ENCODE measurements at regions of chr5 and their contacts with region 1.

Region 1: DNA sequence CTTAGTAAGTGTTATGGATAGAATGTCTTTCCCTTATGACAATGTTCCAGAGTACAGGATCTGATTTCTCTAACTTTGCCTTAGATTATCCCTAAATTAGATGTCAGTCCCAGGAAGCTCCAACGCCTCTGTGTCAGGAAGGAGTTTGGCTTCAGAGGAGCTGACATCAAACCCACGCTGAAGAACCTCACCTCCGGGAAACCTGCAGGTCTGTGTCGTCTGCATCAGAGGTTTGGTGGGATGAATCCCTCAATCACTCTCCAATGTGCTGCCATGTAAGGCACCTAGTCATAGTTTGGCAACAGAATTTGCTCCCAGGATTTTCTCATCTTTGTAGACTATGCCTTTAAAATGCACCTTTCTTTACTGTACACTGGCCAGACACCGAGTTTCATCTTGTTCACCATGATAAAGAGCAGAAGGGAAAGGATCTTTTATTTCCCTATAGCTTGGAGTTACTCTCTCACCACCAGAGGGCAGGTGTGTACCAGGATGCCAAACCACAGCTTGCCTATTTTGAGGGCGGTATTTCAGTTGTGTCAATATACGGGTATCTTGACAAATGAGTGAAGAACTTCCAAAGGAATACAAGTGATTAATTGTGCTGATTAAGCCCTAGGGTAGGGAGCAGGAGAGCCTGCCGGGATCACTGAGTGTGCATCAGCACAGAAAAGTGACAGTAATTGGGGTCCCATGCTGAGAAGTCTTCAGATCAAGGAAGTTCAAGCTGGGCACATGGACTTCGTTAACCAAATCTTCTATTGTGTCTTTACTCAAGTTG is 23.4 kb downstream of the MINAR2 start:
- DNase-seq: peak in 29 of 35 experiments; percentile 3 to 60 (median 22)
- ATAC-seq: peak in 3 of 4 experiments; percentile 53 to 58 (median 54)
- H3K4me3 ChIP-seq: no peak overlapping the region
- H3K4me3 Mint-ChIP-seq: no peak overlapping the region
- H3K27ac ChIP-seq: no peak overlapping the region
- H3K27ac Mint-ChIP-seq: no peak overlapping the region
- H3K4me1 ChIP-seq: no peaks in the 10 kb centered on the region
- H3K4me1 Mint-ChIP-seq: peaks cover 0 to 2% (median 2%) of the 10 kb centered on the region in 3 donors
- H3K27me3 ChIP-seq: no peaks in the 10 kb centered on the region
- H3K27me3 Mint-ChIP-seq: peaks cover 0 to 4% of the 10 kb centered on the region in 2 donors

Region 2: GRCh38 chr5:129447968-129448367 is 323.3 kb before region 1 on chr5:
- CTCF ChIA-PET with region 1: no interaction called
- POLR2A ChIA-PET with region 1: no interaction called
- DNase-seq: no peak
- ATAC-seq: no peak
- H3K4me3 ChIP-seq: no peak overlapping the region
- H3K4me3 Mint-ChIP-seq: no peak overlapping the region
- H3K27ac ChIP-seq: no peak overlapping the region
- H3K27ac Mint-ChIP-seq: no peak overlapping the region
- H3K4me1 ChIP-seq: no peaks in the 10 kb centered on the region
- H3K4me1 Mint-ChIP-seq: no peaks in the 10 kb centered on the region
- H3K27me3 ChIP-seq: no peaks in the 10 kb centered on the region
- H3K27me3 Mint-ChIP-seq: peaks cover 0 to 2% of the 10 kb centered on the region in 2 donors

Region 3: GRCh38 chr5:129760636-129761505 is 10.4 kb before region 1 on chr5:
- CTCF ChIA-PET with region 1: interaction called, 7 to 10 read pairs
- POLR2A ChIA-PET with region 1: interaction called in 1 of 2 experiments, 3 read pairs
- DNase-seq: no peak
- ATAC-seq: no peak
- H3K4me3 ChIP-seq: no peak overlapping the region
- H3K4me3 Mint-ChIP-seq: no peak overlapping the region
- H3K27ac ChIP-seq: no peak overlapping the region
- H3K27ac Mint-ChIP-seq: no peak overlapping the region
- H3K4me1 ChIP-seq: no peaks in the 10 kb centered on the region
- H3K4me1 Mint-ChIP-seq: no peaks in the 10 kb centered on the region
- H3K27me3 ChIP-seq: no peaks in the 10 kb centered on the region
- H3K27me3 Mint-ChIP-seq: peaks cover 0 to 4% of the 10 kb centered on the region in 2 donors

Region 4: GRCh38 chr5:131109540-131110255 is 1338.5 kb after region 1 on chr5:
- CTCF ChIA-PET with region 1: interaction called, 4 to 15 read pairs
- POLR2A ChIA-PET with region 1: no interaction called
- DNase-seq: peak in 20 of 35 experiments; percentile 2 to 67 (median 14)
- ATAC-seq: peak; percentile 59 to 73 (median 62)
- H3K4me3 ChIP-seq: no peak overlapping the region
- H3K4me3 Mint-ChIP-seq: no peak overlapping the region
- H3K27ac ChIP-seq: no peak overlapping the region
- H3K27ac Mint-ChIP-seq: no peak overlapping the region
- H3K4me1 ChIP-seq: peaks cover 0 to 2% of the 10 kb centered on the region in 2 experiments
- H3K4me1 Mint-ChIP-seq: peaks cover 4 to 15% (median 5%) of the 10 kb centered on the region in 3 donors
- H3K27me3 ChIP-seq: no peaks in the 10 kb centered on the region
- H3K27me3 Mint-ChIP-seq: no peaks in the 10 kb centered on the region